ENCODE measurements at regions of chr2 and their contacts with region 1.

Region 1: GRCh38 chr2:143259368-143259958 is 130.2 kb downstream of the ARHGAP15 start:
- DNase-seq: no peak
- H3K4me3 ChIP-seq: no peak overlapping the region
- CTCF ChIP-seq: peak; percentile 69

Region 2: DNA sequence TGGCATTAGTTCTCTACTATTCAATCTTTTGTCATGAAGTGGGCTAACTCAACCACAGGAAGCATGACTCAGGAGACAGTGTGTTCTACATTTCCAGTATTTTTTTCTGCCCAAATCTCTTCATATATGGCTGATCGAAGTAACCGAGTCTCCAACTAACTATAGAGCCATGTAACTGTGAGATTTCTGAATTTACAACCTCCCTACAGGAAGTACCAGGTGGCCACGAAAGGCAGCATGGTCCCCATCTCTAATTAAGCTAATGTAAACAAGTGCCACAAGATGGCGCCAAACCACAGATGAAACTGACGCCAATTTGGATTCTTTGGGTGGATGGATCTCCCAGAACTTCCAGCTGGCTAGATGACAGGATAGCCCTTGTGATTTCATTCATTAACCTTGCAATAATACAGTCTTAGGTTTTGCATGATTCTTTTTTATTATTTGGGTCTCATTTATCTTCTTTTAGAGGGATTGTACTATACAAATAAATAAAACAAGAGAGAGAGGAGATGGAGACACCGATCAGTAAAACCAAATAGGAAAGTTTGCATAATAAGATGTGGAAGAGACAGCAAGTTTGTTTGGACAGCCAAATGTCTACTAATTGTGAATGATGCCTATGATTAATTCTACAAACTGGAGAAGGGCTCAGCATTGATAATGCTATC is 148.6 kb before region 1 on chr2:
- CTCF ChIA-PET with region 1: interaction called, 21 read pairs
- POLR2A ChIA-PET with region 1: no interaction called
- DNase-seq: peak; percentile 2
- H3K4me3 ChIP-seq: no peak overlapping the region
- CTCF ChIP-seq: peak; percentile 65

Region 3: GRCh38 chr2:143162123-143162837 is 97.2 kb before region 1 on chr2:
- CTCF ChIA-PET with region 1: interaction called, 16 read pairs
- POLR2A ChIA-PET with region 1: no interaction called
- DNase-seq: no peak
- H3K4me3 ChIP-seq: no peak overlapping the region
- CTCF ChIP-seq: peak; percentile 46

Region 4: GRCh38 chr2:143205106-143205764 is 54.2 kb before region 1 on chr2:
- CTCF ChIA-PET with region 1: interaction called, 11 read pairs
- POLR2A ChIA-PET with region 1: no interaction called
- DNase-seq: no peak
- H3K4me3 ChIP-seq: no peak overlapping the region
- CTCF ChIP-seq: peak; percentile 4

Measured in AG04449 (cell line).